ENCODE measurements at regions of chr4 and their contacts with region 1.

Region 1: GRCh38 chr4:153634738-153635353 is 49.2 kb upstream of the TLR2 start:
- DNase-seq: no peak
- H3K4me3 ChIP-seq: no peak overlapping the region
- H3K27ac ChIP-seq: no peak overlapping the region
- H3K4me1 ChIP-seq: no peaks in the 10 kb centered on the region
- H3K27me3 ChIP-seq: no peaks in the 10 kb centered on the region
- CTCF ChIP-seq: peak; percentile 71 to 75

Region 2: GRCh38 chr4:154024097-154024694 is 389.4 kb after region 1 on chr4:
- CTCF ChIA-PET with region 1: no interaction called
- dilution Hi-C with region 1: no loop called
- in situ Hi-C with region 1: no loop called
- intact Hi-C with region 1: loop called (anchors 5 kb)
- DNase-seq: no peak
- H3K4me3 ChIP-seq: no peak overlapping the region
- H3K27ac ChIP-seq: no peak overlapping the region
- H3K4me1 ChIP-seq: no peaks in the 10 kb centered on the region
- H3K27me3 ChIP-seq: peaks cover 2% of the 10 kb centered on the region
- CTCF ChIP-seq: peak in 1 of 2 donors; percentile 22

Region 3: GRCh38 chr4:154164931-154165839 is 530.3 kb after region 1 on chr4:
- CTCF ChIA-PET with region 1: no interaction called
- dilution Hi-C with region 1: no loop called
- in situ Hi-C with region 1: no loop called
- intact Hi-C with region 1: no loop called
- DNase-seq: peak; percentile 97
- H3K4me3 ChIP-seq: peak overlapping the region in 2 of 3 experiments; percentile 10 to 17
- H3K27ac ChIP-seq: peak overlapping the region; percentile 83
- H3K4me1 ChIP-seq: peaks cover 20% of the 10 kb centered on the region
- H3K27me3 ChIP-seq: no peaks in the 10 kb centered on the region
- CTCF ChIP-seq: no peak

Measured in mammary epithelial cell (primary cell).